ENCODE measurements at regions of chr4 and their contacts with region 1.

Region 1: DNA sequence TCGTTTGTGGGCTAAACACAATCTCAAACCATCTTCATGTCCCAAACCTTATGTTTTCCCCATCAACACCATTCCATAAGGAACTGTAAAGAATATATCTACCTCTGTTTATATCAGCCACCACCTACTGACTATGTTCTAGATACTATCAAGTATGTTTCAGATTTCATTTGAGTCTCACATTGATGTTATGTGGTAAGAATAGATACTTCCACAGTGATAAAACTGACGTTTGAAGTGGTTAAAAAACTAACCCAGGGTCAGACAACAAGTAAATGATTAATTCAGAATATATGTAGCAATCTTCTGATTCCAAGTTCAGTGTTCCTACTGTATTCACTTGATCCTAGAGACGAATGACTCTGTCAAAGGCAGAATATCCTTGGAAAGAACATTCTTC is 156.8 kb upstream of the RASGEF1B start:
- DNase-seq: no peak
- H3K4me3 ChIP-seq: no peak overlapping the region
- H3K4me3 Mint-ChIP-seq: no peak overlapping the region
- H3K27ac ChIP-seq: no peak overlapping the region
- H3K27ac Mint-ChIP-seq: no peak overlapping the region
- H3K4me1 ChIP-seq: no peaks in the 10 kb centered on the region
- H3K4me1 Mint-ChIP-seq: no peaks in the 10 kb centered on the region
- H3K27me3 ChIP-seq: no peaks in the 10 kb centered on the region
- H3K27me3 Mint-ChIP-seq: no peaks in the 10 kb centered on the region

Region 2: GRCh38 chr4:81565142-81565870 is 63.2 kb before region 1 on chr4:
- CTCF ChIA-PET with region 1: no interaction called
- POLR2A ChIA-PET with region 1: no interaction called
- DNase-seq: no peak
- H3K4me3 ChIP-seq: no peak overlapping the region
- H3K4me3 Mint-ChIP-seq: no peak overlapping the region
- H3K27ac ChIP-seq: no peak overlapping the region
- H3K27ac Mint-ChIP-seq: no peak overlapping the region
- H3K4me1 ChIP-seq: peaks cover 13% of the 10 kb centered on the region
- H3K4me1 Mint-ChIP-seq: peaks cover 7 to 14% (median 14%) of the 10 kb centered on the region in 3 donors
- H3K27me3 ChIP-seq: no peaks in the 10 kb centered on the region
- H3K27me3 Mint-ChIP-seq: no peaks in the 10 kb centered on the region

Region 3: DNA sequence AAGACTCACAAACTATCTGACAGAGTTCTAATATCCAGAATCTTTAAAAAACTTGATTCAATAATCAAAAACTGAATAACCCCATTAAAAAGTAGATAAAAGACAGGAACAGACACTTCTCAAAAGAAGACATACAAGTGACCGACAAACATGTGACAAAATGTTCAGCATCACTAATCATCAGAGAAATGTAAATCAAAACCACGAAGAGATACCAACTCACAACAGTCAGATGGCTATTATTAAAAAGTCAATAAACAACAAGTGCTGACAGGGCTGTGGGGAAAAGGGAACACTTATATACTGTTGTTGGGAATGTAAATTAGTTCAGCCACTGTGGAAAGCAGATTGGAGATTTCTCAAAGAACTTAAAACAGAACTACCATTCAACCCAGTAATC is 18.6 kb before region 1 on chr4:
- CTCF ChIA-PET with region 1: no interaction called
- POLR2A ChIA-PET with region 1: no interaction called
- DNase-seq: no peak
- H3K4me3 ChIP-seq: no peak overlapping the region
- H3K4me3 Mint-ChIP-seq: no peak overlapping the region
- H3K27ac ChIP-seq: no peak overlapping the region
- H3K27ac Mint-ChIP-seq: no peak overlapping the region
- H3K4me1 ChIP-seq: no peaks in the 10 kb centered on the region
- H3K4me1 Mint-ChIP-seq: no peaks in the 10 kb centered on the region
- H3K27me3 ChIP-seq: no peaks in the 10 kb centered on the region
- H3K27me3 Mint-ChIP-seq: peaks cover 0 to 2% of the 10 kb centered on the region in 2 donors

Region 4: DNA sequence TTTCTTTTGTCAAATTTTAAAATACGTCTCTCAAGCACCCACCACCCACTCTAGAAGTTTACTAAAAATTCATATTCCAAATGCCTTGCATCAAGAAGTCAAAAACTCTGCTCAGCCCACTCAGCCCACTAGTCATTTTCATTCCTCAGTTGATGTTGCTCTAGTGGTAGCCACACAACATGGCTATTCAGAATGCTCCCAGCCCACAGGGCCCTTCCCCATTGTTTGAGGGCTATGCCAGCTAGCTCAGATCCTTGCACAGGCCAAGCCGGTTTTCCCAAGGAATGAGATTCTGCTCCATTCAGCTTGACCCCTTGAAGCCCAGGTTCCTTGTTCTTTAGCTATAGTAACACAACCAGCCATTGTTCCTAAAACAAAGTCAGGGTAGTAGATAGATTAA is 140.8 kb after region 1 on chr4:
- CTCF ChIA-PET with region 1: no interaction called
- POLR2A ChIA-PET with region 1: interaction called, 12 read pairs
- DNase-seq: no peak
- H3K4me3 ChIP-seq: no peak overlapping the region
- H3K4me3 Mint-ChIP-seq: no peak overlapping the region
- H3K27ac ChIP-seq: no peak overlapping the region
- H3K27ac Mint-ChIP-seq: peak overlapping the region in 1 of 8 donors; percentile 15
- H3K4me1 ChIP-seq: no peaks in the 10 kb centered on the region
- H3K4me1 Mint-ChIP-seq: no peaks in the 10 kb centered on the region
- H3K27me3 ChIP-seq: no peaks in the 10 kb centered on the region
- H3K27me3 Mint-ChIP-seq: peaks cover 6 to 16% of the 10 kb centered on the region in 2 donors